Activated CD4-positive, alpha-beta T cell treated with anti-CD3 and anti-CD28 coated beads, Interleukin-2, amount 10 ng/mL, durations not matched to agents 24 days and 14 days (primary cell): ENCODE measurements at regions of chr10 and their contacts with region 1.

Region 1: DNA sequence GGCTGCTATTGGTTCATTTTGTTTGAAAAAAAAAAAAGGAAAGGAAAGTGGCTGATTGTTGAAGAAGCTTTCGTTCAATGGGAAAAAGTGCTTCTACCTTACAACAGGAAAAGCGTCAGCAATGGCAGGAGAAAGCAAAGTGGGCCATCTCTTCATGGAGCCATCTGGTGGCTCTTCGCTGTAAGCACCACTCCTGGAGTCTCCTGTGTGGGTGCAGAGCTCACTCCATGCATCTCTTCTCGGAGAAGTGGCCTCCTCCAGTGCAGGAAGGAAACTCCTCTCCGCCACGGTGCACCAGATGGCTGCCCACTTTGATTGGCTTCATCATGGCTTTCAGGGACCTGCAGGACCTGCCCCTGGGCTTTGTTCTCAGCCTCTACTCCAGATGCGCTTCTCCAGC is 250.9 kb downstream of the PTEN start:
- DNase-seq: peak; percentile 65
- H3K4me3 Mint-ChIP-seq: no peak overlapping the region
- H3K27ac Mint-ChIP-seq: no peak overlapping the region
- H3K4me1 Mint-ChIP-seq: peaks cover 28% of the 10 kb centered on the region
- H3K27me3 Mint-ChIP-seq: peaks cover 3% of the 10 kb centered on the region

Region 2: DNA sequence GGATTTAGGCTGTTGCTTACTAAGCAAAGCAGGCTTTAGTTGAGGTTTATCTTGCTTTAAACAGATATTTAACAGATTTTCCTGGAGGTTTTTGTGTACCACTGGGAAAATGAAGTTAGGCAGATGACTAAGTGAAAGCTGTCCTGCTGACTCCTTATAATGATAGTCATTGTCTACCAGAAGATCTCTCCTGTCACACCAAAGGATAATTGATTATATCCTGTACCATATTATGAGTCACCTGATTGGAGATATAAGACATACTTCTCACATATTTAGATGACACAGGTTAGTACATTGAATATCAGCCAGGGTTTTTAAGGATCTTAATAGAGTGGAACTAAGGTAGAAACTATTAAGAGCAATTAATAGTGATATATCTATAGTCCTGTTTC is 182.5 kb before region 1 on chr10:
- intact Hi-C with region 1: loop called (anchors 5 kb)
- DNase-seq: no peak
- H3K4me3 Mint-ChIP-seq: no peak overlapping the region
- H3K27ac Mint-ChIP-seq: no peak overlapping the region
- H3K4me1 Mint-ChIP-seq: peaks cover 35% of the 10 kb centered on the region
- H3K27me3 Mint-ChIP-seq: no peaks in the 10 kb centered on the region

Region 3: GRCh38 chr10:88091490-88092105 is 22.8 kb before region 1 on chr10:
- intact Hi-C with region 1: loop called (anchors 1 kb)
- DNase-seq: peak; percentile 92
- H3K4me3 Mint-ChIP-seq: no peak overlapping the region
- H3K27ac Mint-ChIP-seq: peak overlapping the region; percentile 56
- H3K4me1 Mint-ChIP-seq: peaks cover 30% of the 10 kb centered on the region
- H3K27me3 Mint-ChIP-seq: peaks cover 46% of the 10 kb centered on the region

Region 4: DNA sequence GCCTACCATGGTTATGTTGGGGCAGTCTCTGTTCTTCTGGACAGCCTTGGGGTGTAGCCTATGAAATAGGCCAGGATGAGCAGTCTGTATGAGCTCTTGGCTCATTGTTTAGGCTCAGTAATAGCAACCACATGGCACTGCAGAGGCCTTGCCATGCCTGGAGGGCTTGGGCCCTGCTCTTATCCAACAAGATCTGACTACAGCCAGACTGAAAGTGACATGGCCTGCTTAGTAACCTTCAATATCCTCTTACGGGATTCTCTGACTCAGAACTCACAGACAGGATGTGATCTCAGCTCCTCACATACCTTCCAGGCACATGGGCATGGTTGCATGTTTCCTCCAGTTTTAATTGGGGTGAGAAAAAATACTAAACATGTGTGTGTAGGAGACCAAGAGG is 38.4 kb after region 1 on chr10:
- intact Hi-C with region 1: loop called (anchors 1 kb)
- DNase-seq: peak; percentile 83
- H3K4me3 Mint-ChIP-seq: peak overlapping the region; percentile 57
- H3K27ac Mint-ChIP-seq: peak overlapping the region; percentile 91
- H3K4me1 Mint-ChIP-seq: peaks cover 20% of the 10 kb centered on the region
- H3K27me3 Mint-ChIP-seq: no peaks in the 10 kb centered on the region

Region 5: DNA sequence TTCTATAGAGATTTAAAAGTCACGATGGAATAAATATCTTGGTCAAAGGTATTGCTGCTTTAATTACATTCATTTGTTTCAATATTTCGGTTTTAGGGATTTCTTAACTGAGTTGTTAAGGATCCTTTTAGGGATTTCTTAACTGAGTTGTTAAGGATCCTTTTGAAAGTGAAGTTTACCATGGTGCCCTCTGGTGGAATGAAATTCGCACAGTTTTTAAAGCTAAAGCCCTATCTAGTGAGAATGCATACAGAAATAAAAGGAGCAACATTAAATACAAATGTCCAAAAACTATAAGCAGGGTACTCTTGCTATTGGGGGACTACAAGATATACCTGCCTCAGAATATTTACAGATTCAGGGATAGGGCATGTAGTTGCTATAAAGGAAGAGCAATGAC is 275.1 kb after region 1 on chr10:
- intact Hi-C with region 1: loop called (anchors 2 kb)
- DNase-seq: peak; percentile 82
- H3K4me3 Mint-ChIP-seq: no peak overlapping the region
- H3K27ac Mint-ChIP-seq: no peak overlapping the region
- H3K4me1 Mint-ChIP-seq: peaks cover 31% of the 10 kb centered on the region
- H3K27me3 Mint-ChIP-seq: no peaks in the 10 kb centered on the region

Region 6: DNA sequence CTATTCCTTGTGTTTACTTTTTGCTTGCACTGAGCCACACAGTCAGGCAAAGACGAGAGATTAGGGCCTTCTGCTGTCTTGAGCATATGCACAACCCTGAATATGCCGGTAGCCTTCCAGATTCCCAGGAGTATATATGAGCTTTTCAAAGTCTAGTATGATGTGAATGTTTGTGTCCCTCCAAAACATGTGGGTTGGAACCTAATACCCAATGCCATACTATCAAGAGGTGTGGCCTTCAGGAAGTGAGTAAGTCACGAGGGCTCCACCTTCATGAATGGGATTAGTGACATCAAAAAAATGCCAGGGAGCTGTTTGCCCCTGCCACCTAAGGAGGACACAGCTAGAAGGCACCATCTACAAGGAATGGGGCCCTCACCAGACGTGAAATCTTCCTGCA is 987.6 kb after region 1 on chr10:
- intact Hi-C with region 1: no loop called
- DNase-seq: no peak
- H3K4me3 Mint-ChIP-seq: no peak overlapping the region
- H3K27ac Mint-ChIP-seq: no peak overlapping the region
- H3K4me1 Mint-ChIP-seq: peaks cover 2% of the 10 kb centered on the region
- H3K27me3 Mint-ChIP-seq: peaks cover 16% of the 10 kb centered on the region